HCT116 (cell line): ENCODE measurements at regions of chr6 and their contacts with region 1.

Region 1: GRCh38 chr6:46456297-46456696 is 35.0 kb downstream of the RCAN2 start:
- DNase-seq: no peak
- ATAC-seq: no peak
- H3K4me3 ChIP-seq: no peak overlapping the region
- H3K27ac ChIP-seq: no peak overlapping the region
- H3K4me1 ChIP-seq: no peaks in the 10 kb centered on the region
- H3K27me3 ChIP-seq: no peaks in the 10 kb centered on the region
- CTCF ChIP-seq: no peak
- POLR2A ChIP-seq: no peak
- RAD21 ChIP-seq: no peak

Region 2: DNA sequence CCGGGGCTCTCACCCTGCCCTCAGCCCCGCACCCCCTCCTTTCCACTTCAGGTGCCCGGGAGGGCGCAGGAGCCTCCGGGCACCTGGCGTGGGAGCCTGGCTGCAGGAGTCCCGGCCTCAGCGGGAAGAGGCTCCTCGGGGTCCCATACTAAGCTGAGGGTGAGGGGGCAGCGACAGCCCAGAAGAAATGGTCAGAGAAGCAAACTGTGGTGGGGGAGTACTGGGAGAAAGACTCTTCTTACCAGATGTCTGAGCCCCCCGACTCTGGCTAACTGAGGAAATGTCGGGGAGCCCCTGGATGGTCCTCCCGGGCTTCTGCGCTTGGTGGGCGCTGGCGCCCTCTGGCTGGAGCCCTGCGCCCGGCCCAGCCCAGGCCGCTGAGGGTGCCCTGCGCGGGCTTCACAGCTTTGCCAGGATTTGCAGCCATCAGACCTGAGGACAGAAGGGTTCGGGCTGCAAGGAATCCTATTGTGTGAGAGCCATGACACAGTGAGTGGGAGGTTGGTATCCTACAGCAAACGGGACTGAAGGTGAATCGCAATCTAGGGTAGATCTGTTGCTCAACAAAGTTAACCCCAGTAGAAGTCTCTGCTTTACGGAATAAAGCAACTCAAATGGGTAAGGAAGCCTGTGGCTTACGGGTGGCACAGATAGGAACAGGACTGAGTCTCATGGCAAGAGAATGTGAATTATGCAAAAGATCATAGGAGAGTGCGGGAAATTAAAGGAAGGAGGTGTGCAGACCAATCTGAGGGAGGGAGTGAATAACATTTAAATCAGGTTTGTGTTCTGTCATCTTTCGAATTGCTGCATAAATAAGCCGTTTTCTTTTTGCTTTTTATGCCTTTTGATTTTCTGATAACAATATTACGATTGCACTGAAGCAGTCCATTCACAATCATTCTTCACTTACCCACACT is 35.6 kb after region 1 on chr6:
- CTCF ChIA-PET with region 1: interaction called, 3 read pairs
- POLR2A ChIA-PET with region 1: no interaction called
- RAD21 ChIA-PET with region 1: no interaction called
- intact Hi-C with region 1: loop called (anchors 1 kb)
- DNase-seq: peak; percentile 24
- ATAC-seq: peak; percentile 80
- H3K4me3 ChIP-seq: peak overlapping the region; percentile 58 to 69
- H3K27ac ChIP-seq: no peak overlapping the region; the same call in 1 of the 2 replicates
- H3K4me1 ChIP-seq: peaks cover 2 to 12% of the 10 kb centered on the region in 2 experiments; a peak in 3 of 4 replicates
- H3K27me3 ChIP-seq: peaks cover 29% of the 10 kb centered on the region; the same call in 1 of the 2 replicates
- CTCF ChIP-seq: peak; percentile 42 to 64 (median 58); a peak in 5 of 6 replicates
- POLR2A ChIP-seq: no peak
- RAD21 ChIP-seq: peak; percentile 51